ENCODE measurements at regions of chr19 and their contacts with region 1.

Region 1: GRCh38 chr19:40662921-40663694 is 27.3 kb downstream of the NUMBL start:
- DNase-seq: peak; percentile 82
- H3K4me3 ChIP-seq: peak overlapping the region; percentile 44 to 63 (median 51)
- H3K27ac ChIP-seq: no peak overlapping the region
- H3K4me1 ChIP-seq: peaks cover 13% of the 10 kb centered on the region
- H3K27me3 ChIP-seq: no peaks in the 10 kb centered on the region
- CTCF ChIP-seq: peak; percentile 84 to 96
- POLR2A ChIP-seq: peak; percentile 10

Region 2: DNA sequence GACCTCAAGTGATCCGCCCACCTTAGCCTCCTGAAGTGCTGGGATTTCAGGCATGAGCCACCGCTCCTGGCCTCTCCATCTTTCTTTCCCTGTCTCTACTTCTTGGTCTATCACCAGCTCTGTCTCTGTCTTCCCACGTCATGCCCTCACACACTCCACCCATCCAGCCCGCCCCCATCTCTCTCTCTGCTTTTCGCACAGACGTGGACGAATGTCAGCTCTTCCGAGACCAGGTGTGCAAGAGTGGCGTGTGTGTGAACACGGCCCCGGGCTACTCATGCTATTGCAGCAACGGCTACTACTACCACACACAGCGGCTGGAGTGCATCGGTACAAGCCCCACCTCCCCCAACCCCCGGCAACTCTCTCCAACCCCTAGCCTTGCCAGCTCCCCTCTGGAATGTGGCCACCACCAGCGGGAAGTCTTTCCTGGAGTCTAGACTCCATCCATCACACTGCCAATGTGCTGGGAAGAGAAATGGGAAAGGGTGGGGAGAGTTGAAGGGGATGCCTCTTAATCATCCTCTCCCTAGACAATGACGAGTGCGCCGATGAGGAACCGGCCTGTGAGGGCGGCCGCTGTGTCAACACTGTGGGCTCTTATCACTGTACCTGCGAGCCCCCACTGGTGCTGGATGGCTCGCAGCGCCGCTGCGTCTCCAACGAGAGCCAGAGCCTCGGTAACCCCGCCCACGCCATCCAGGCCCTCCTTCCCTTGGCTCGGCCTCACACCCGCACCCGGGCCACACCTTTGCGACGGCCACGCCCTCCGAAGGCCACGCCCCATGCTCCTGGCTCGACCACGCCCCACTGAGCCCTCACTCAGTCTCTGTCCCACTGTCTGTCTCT is 39.5 kb before region 1 on chr19:
- CTCF ChIA-PET with region 1: no interaction called
- POLR2A ChIA-PET with region 1: no interaction called
- dilution Hi-C with region 1: no loop called
- intact Hi-C with region 1: no loop called
- DNase-seq: no peak
- H3K4me3 ChIP-seq: no peak overlapping the region
- H3K27ac ChIP-seq: no peak overlapping the region
- H3K4me1 ChIP-seq: no peaks in the 10 kb centered on the region
- H3K27me3 ChIP-seq: no peaks in the 10 kb centered on the region
- CTCF ChIP-seq: no peak
- POLR2A ChIP-seq: no peak

Region 3: GRCh38 chr19:40650749-40651305 is 12.3 kb before region 1 on chr19:
- CTCF ChIA-PET with region 1: interaction called, 10 read pairs
- POLR2A ChIA-PET with region 1: no interaction called
- dilution Hi-C with region 1: no loop called
- intact Hi-C with region 1: no loop called
- DNase-seq: no peak
- H3K4me3 ChIP-seq: no peak overlapping the region
- H3K27ac ChIP-seq: no peak overlapping the region
- H3K4me1 ChIP-seq: peaks cover 11% of the 10 kb centered on the region
- H3K27me3 ChIP-seq: no peaks in the 10 kb centered on the region
- CTCF ChIP-seq: no peak
- POLR2A ChIP-seq: no peak

Region 4: DNA sequence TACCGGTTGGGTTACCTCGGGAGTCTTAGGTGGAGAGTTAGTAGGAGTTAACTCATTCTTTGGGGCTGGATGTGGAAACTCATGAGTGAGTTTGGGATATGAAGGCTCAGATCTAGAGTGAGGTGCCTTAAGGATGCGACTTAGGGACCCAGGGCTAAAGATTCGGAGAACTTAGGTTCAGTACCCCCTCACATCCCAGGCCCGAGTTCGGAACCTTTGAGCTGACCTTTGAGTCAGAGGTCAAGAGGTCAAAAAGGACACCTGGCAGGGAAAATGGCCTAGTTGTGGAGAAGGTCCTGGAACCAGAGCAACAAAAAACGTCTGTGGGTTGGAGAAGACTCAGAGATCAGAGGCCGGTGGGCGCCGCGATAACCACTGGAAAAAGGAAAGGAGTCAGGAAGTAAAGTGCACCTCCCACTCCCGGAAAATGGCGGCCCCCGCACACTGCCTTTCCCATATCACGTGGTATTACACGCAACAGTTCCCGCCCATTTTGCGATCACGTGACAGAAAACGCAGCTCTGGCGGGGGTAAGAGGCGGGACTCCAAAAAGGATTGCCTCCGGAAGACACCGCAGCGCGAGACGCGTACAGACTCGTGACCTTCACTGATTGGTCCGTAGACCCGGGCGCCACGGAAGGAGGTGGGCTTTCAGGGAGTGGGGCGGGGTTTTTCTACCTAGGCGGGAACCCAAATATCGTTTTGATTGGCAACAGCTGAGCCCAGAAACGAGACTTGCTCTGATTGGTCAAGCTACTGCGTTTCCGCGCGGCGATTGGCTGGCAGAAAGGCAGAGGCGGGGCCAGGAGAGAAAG is 87.2 kb after region 1 on chr19 and contains the start of gene ACTMAP:
- CTCF ChIA-PET with region 1: interaction called, 5 read pairs
- POLR2A ChIA-PET with region 1: no interaction called
- dilution Hi-C with region 1: no loop called
- intact Hi-C with region 1: loop called (anchors 1 kb)
- DNase-seq: peak; percentile 100
- H3K4me3 ChIP-seq: peak within 1 kb of the TSS; percentile 56 to 86 (median 73)
- H3K27ac ChIP-seq: peak within 1 kb of the TSS; percentile 94
- H3K4me1 ChIP-seq: peaks cover 28% of the 10 kb centered on the region
- H3K27me3 ChIP-seq: no peaks in the 10 kb centered on the region
- CTCF ChIP-seq: no peak
- POLR2A ChIP-seq: peak; percentile 76
- total RNA-seq, gene ACTMAP: 7.7 and 9.1 TPM in 2 replicates

Region 5: GRCh38 chr19:40798223-40798996 is 135.3 kb after region 1 on chr19:
- CTCF ChIA-PET with region 1: interaction called, 17 read pairs
- POLR2A ChIA-PET with region 1: interaction called, 3 read pairs
- dilution Hi-C with region 1: no loop called
- intact Hi-C with region 1: no loop called
- DNase-seq: peak; percentile 100
- H3K4me3 ChIP-seq: peak overlapping the region; percentile 43 to 79 (median 52)
- H3K27ac ChIP-seq: peak overlapping the region; percentile 71
- H3K4me1 ChIP-seq: peaks cover 42% of the 10 kb centered on the region
- H3K27me3 ChIP-seq: no peaks in the 10 kb centered on the region
- CTCF ChIP-seq: peak; percentile 12 to 32
- POLR2A ChIP-seq: no peak

Region 6: GRCh38 chr19:40813182-40813958 is 150.3 kb after region 1 on chr19:
- CTCF ChIA-PET with region 1: interaction called, 70 read pairs
- POLR2A ChIA-PET with region 1: no interaction called
- dilution Hi-C with region 1: no loop called
- intact Hi-C with region 1: no loop called
- DNase-seq: no peak
- H3K4me3 ChIP-seq: no peak overlapping the region
- H3K27ac ChIP-seq: no peak overlapping the region
- H3K4me1 ChIP-seq: peaks cover 11% of the 10 kb centered on the region
- H3K27me3 ChIP-seq: peaks cover 3 to 8% of the 10 kb centered on the region in 2 experiments
- CTCF ChIP-seq: no peak
- POLR2A ChIP-seq: no peak

Region 7: GRCh38 chr19:41089955-41090354 is 426.8 kb after region 1 on chr19:
- CTCF ChIA-PET with region 1: no interaction called
- POLR2A ChIA-PET with region 1: no interaction called
- dilution Hi-C with region 1: no loop called
- intact Hi-C with region 1: no loop called
- DNase-seq: no peak
- H3K4me3 ChIP-seq: no peak overlapping the region
- H3K27ac ChIP-seq: no peak overlapping the region
- H3K4me1 ChIP-seq: no peaks in the 10 kb centered on the region
- H3K27me3 ChIP-seq: peaks cover 2 to 6% of the 10 kb centered on the region in 2 experiments
- CTCF ChIP-seq: no peak
- POLR2A ChIP-seq: no peak

Region 8: DNA sequence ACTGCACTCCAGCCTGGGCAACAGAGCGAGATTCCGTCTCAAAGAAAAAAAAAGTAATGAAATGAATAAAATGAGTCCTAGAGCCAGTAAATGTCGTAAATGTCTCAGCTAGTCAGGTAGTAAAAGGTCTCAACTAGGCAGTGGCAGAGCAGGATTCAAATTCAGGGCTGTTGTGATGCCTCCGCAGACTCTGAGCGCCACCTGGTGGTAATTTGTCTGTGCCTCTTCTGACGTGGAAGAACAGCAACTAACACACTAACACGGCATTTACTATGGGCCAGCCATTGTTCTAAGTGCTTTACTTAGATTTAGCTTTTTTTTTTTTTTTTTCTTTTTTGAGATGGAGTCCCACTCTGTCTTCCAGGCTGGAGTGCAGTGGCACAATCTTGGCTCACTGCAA is 481.3 kb after region 1 on chr19:
- CTCF ChIA-PET with region 1: interaction called, 42 read pairs
- POLR2A ChIA-PET with region 1: no interaction called
- dilution Hi-C with region 1: no loop called
- intact Hi-C with region 1: loop called (anchors 1 kb)
- DNase-seq: peak; percentile 79
- H3K4me3 ChIP-seq: no peak overlapping the region
- H3K27ac ChIP-seq: no peak overlapping the region
- H3K4me1 ChIP-seq: no peaks in the 10 kb centered on the region
- H3K27me3 ChIP-seq: no peaks in the 10 kb centered on the region
- CTCF ChIP-seq: peak; percentile 77 to 86
- POLR2A ChIP-seq: no peak

Measured in endothelial cell of umbilical vein (primary cell).